ENCODE measurements at regions of chr5 and their contacts with region 1.

Region 1: DNA sequence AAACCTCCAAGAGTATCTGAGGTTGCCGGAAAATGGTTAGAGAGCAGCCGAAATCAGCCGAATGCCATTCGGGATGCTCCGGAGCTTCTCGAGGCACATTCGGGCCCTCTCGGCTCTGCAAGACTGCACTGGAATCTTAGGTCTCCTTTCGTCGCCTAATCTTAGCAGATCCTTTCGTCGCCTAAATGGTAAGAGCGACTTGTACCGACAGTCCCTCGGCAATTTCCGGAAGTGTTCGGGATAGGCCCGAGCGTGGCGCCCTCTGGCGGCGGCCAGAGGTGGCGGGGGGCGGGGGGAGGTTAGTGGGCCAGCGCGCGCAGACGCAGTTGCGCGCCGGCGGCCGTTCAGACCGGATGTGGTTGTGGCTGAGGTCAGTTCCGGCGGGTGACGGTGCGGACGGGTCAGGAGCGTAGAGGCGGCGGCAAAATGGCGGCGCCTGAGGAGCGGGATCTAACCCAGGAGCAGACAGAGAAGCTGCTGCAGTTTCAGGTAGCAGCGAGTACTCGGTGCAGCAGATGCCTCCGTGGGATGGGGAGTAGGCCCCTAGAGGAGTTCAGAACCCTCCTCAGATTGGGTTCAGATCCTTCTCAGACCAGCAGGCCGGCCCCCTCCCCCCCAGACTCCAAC is at the start of gene FAF2:
- DNase-seq: peak; percentile 97 to 100 (median 99)
- ATAC-seq: peak; percentile 97
- H3K4me3 ChIP-seq: peak within 1 kb of the TSS; percentile 99
- H3K4me3 Mint-ChIP-seq: peak within 1 kb of the TSS; percentile 92 to 99 (median 98)
- H3K27ac ChIP-seq: peak within 1 kb of the TSS; percentile 94
- H3K27ac Mint-ChIP-seq: peak within 1 kb of the TSS; percentile 81 to 99 (median 98)
- H3K4me1 ChIP-seq: peaks cover 22 to 23% of the 10 kb centered on the region in 2 donors
- H3K4me1 Mint-ChIP-seq: peaks cover 25 to 49% (median 40%) of the 10 kb centered on the region in 7 donors
- H3K27me3 ChIP-seq: no peaks in the 10 kb centered on the region
- H3K27me3 Mint-ChIP-seq: peaks cover 0 to 8% (median 0%) of the 10 kb centered on the region in 5 donors
- total RNA-seq, gene FAF2: 28.0 to 43.2 (median 31.2) TPM

Region 2: DNA sequence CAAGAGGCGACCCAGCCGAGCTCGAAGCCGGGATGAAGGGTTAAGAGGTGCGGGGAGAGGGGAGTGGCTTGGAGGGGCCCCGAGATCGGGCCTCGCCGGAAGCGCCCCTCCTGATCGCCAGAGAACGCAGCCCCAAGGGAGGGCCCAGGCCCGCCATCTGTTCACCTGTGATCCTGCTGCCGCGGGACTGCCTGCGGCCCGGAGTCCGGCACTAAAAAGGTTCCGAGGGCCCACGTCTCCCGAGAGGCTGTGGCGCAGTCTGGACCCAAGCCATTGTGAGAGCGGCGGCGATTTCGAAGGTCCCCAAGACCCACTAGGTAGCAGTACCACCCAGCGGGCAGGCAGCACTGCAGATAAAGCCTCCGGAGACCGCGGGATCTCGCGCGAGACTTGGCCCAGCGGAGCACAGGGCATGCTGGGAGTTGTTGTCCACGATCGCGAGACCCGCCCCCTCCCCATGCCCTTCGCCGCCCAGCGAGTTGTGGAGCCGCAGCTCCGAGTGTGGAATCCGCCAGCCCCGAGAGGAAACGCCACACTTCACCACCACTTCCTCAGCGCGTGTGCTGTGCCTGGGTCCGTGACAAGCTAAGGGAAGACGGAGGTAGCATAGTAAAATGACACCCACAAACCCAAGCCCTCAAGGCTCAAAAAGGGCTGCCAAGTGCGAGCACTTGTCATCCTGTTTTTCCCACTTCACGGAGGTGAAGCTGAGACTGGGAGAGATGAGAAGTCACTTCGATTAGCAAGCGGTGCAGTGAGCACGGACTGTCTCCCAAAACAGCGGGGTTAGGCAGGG is 86.5 kb before region 1 on chr5 and contains the start of gene KIAA1191:
- CTCF ChIA-PET with region 1: interaction called, 3 read pairs
- POLR2A ChIA-PET with region 1: interaction called, 5 read pairs
- intact Hi-C with region 1: loop called (anchors 1 kb)
- DNase-seq: peak; percentile 80 to 96 (median 93)
- ATAC-seq: peak; percentile 96
- H3K4me3 ChIP-seq: peak within 1 kb of the TSS; percentile 82
- H3K4me3 Mint-ChIP-seq: peak within 1 kb of the TSS; percentile 93 to 99 (median 98)
- H3K27ac ChIP-seq: peak within 1 kb of the TSS; percentile 80
- H3K27ac Mint-ChIP-seq: peak within 1 kb of the TSS; percentile 91 to 99 (median 94)
- H3K4me1 ChIP-seq: peaks cover 19 to 24% of the 10 kb centered on the region in 2 donors
- H3K4me1 Mint-ChIP-seq: peaks cover 21 to 49% (median 38%) of the 10 kb centered on the region in 7 donors
- H3K27me3 ChIP-seq: no peaks in the 10 kb centered on the region
- H3K27me3 Mint-ChIP-seq: no peaks in the 10 kb centered on the region
- total RNA-seq, gene KIAA1191: 59.4 to 76.6 (median 65.9) TPM

Region 3: GRCh38 chr5:176415952-176416924 is 31.9 kb before region 1 on chr5 and contains the start of gene CLTB:
- CTCF ChIA-PET with region 1: interaction called, 19 read pairs
- POLR2A ChIA-PET with region 1: interaction called, 20 read pairs
- intact Hi-C with region 1: loop called (anchors 1 kb)
- DNase-seq: peak; percentile 73 to 86 (median 84)
- ATAC-seq: peak; percentile 97
- H3K4me3 ChIP-seq: peak within 1 kb of the TSS; percentile 52
- H3K4me3 Mint-ChIP-seq: peak within 1 kb of the TSS; percentile 74 to 89 (median 84)
- H3K27ac ChIP-seq: peak within 1 kb of the TSS; percentile 86
- H3K27ac Mint-ChIP-seq: peak within 1 kb of the TSS; percentile 71 to 91 (median 87)
- H3K4me1 ChIP-seq: peaks cover 21 to 28% of the 10 kb centered on the region in 2 donors
- H3K4me1 Mint-ChIP-seq: peaks cover 17 to 53% (median 47%) of the 10 kb centered on the region in 7 donors
- H3K27me3 ChIP-seq: no peaks in the 10 kb centered on the region
- H3K27me3 Mint-ChIP-seq: peaks cover 0 to 19% (median 0%) of the 10 kb centered on the region in 5 donors
- total RNA-seq, gene CLTB: 30.6 to 67.2 (median 63.8) TPM

Region 4: GRCh38 chr5:176461349-176461748 is 13.3 kb after region 1 on chr5:
- CTCF ChIA-PET with region 1: no interaction called
- POLR2A ChIA-PET with region 1: no interaction called
- intact Hi-C with region 1: no loop called
- DNase-seq: no peak
- ATAC-seq: no peak
- H3K4me3 ChIP-seq: no peak overlapping the region
- H3K4me3 Mint-ChIP-seq: no peak overlapping the region
- H3K27ac ChIP-seq: no peak overlapping the region
- H3K27ac Mint-ChIP-seq: no peak overlapping the region
- H3K4me1 ChIP-seq: peaks cover 0 to 7% of the 10 kb centered on the region in 2 donors
- H3K4me1 Mint-ChIP-seq: peaks cover 27 to 65% (median 55%) of the 10 kb centered on the region in 7 donors
- H3K27me3 ChIP-seq: no peaks in the 10 kb centered on the region
- H3K27me3 Mint-ChIP-seq: no peaks in the 10 kb centered on the region

Region 5: GRCh38 chr5:176490301-176490700 is 42.2 kb after region 1 on chr5:
- CTCF ChIA-PET with region 1: no interaction called
- POLR2A ChIA-PET with region 1: no interaction called
- intact Hi-C with region 1: loop called in 1 of 2 experiments (anchors 5 kb)
- DNase-seq: no peak
- ATAC-seq: no peak
- H3K4me3 ChIP-seq: no peak overlapping the region
- H3K4me3 Mint-ChIP-seq: peak overlapping the region in 1 of 10 donors; percentile 41
- H3K27ac ChIP-seq: no peak overlapping the region
- H3K27ac Mint-ChIP-seq: peak overlapping the region in 4 of 9 donors; percentile 41 to 69 (median 47)
- H3K4me1 ChIP-seq: peaks cover 13 to 21% of the 10 kb centered on the region in 2 donors
- H3K4me1 Mint-ChIP-seq: peaks cover 26 to 54% (median 40%) of the 10 kb centered on the region in 7 donors
- H3K27me3 ChIP-seq: no peaks in the 10 kb centered on the region
- H3K27me3 Mint-ChIP-seq: no peaks in the 10 kb centered on the region

Region 6: GRCh38 chr5:176543428-176544173 is 95.5 kb after region 1 on chr5:
- CTCF ChIA-PET with region 1: interaction called, 9 read pairs
- POLR2A ChIA-PET with region 1: interaction called, 91 read pairs
- intact Hi-C with region 1: loop called (anchors 1 kb)
- DNase-seq: peak; percentile 60 to 84 (median 72)
- ATAC-seq: peak; percentile 79
- H3K4me3 ChIP-seq: peak overlapping the region; percentile 75
- H3K4me3 Mint-ChIP-seq: peak overlapping the region; percentile 90 to 96 (median 94)
- H3K27ac ChIP-seq: peak overlapping the region; percentile 88
- H3K27ac Mint-ChIP-seq: peak overlapping the region; percentile 80 to 97 (median 94)
- H3K4me1 ChIP-seq: peaks cover 46 to 51% of the 10 kb centered on the region in 2 donors
- H3K4me1 Mint-ChIP-seq: peaks cover 41 to 76% (median 69%) of the 10 kb centered on the region in 7 donors
- H3K27me3 ChIP-seq: no peaks in the 10 kb centered on the region
- H3K27me3 Mint-ChIP-seq: no peaks in the 10 kb centered on the region

Region 7: GRCh38 chr5:176817841-176818377 is 369.8 kb after region 1 on chr5:
- CTCF ChIA-PET with region 1: no interaction called
- POLR2A ChIA-PET with region 1: no interaction called
- intact Hi-C with region 1: no loop called
- DNase-seq: no peak
- ATAC-seq: peak; percentile 35
- H3K4me3 ChIP-seq: peak overlapping the region; percentile 19
- H3K4me3 Mint-ChIP-seq: peak overlapping the region; percentile 55 to 85 (median 68)
- H3K27ac ChIP-seq: no peak overlapping the region
- H3K27ac Mint-ChIP-seq: no peak overlapping the region
- H3K4me1 ChIP-seq: peaks cover 0 to 11% of the 10 kb centered on the region in 2 donors
- H3K4me1 Mint-ChIP-seq: peaks cover 5 to 14% (median 9%) of the 10 kb centered on the region in 7 donors
- H3K27me3 ChIP-seq: no peaks in the 10 kb centered on the region
- H3K27me3 Mint-ChIP-seq: peaks cover 65 to 85% (median 71%) of the 10 kb centered on the region in 5 donors

Region 8: DNA sequence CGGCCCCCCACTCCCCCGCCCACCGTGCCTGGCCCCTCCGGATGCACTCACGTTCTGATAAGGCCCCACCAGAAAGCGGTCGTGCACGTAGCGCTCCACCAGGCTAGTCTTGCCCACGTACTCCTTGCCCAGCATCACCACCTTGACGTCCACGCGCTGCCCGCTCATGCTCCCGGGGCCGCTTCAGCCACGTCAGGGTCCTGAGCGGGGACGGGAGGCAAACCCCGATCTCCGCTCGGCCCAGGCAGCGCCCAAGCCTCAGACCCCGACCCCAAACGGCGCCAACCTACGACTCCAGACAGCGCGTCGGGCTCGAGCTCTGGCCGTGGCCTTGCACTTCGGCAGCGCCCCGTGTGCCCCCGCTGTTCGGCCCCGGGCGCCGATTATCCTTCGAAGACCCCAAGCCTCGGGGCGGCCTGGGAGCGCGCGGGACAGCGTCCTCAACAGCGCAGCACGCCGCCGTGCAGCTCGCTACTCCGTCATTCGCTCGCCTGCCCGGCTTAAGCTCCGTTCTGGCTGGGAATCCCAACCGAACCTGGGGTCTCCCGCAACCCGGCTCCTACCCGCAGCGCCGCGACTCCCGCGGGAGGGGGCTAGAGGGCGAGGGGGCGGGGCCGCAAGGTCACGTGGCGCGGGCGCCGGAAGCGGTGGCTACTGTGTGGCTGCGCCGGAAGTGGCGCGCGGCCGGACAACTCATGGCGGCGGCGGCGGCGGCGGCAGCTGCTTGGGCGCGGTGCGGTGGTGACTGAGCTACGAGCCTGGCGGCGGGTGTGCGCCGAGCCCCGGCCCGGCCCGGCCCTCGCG is 855.2 kb after region 1 on chr5 and contains the starts of genes PRELID1 and RAB24:
- CTCF ChIA-PET with region 1: no interaction called
- POLR2A ChIA-PET with region 1: no interaction called
- intact Hi-C with region 1: loop called in 1 of 2 experiments (anchors 5 kb)
- DNase-seq: peak; percentile 78 to 95 (median 85)
- ATAC-seq: peak; percentile 80
- H3K4me3 ChIP-seq: peak within 1 kb of the TSS; percentile 98
- H3K4me3 Mint-ChIP-seq: peak within 1 kb of the TSS; percentile 84 to 95 (median 88)
- H3K27ac ChIP-seq: peak within 1 kb of the TSS; percentile 78
- H3K27ac Mint-ChIP-seq: peak within 1 kb of the TSS; percentile 73 to 96 (median 90)
- H3K4me1 ChIP-seq: peaks cover 46 to 49% of the 10 kb centered on the region in 2 donors
- H3K4me1 Mint-ChIP-seq: peaks cover 52 to 76% (median 74%) of the 10 kb centered on the region in 7 donors
- H3K27me3 ChIP-seq: no peaks in the 10 kb centered on the region
- H3K27me3 Mint-ChIP-seq: no peaks in the 10 kb centered on the region
- total RNA-seq, gene PRELID1: 49.0 to 172 (median 57.2) TPM
- total RNA-seq, gene RAB24: 18.0 to 47.5 (median 24.3) TPM

Measured in naive thymus-derived CD4-positive, alpha-beta T cell (primary cell).